ENCODE measurements at regions of chr15 and their contacts with region 1.

Region 1: GRCh38 chr15:44501768-44502366 is 35.1 kb upstream of the EIF3J start:
- DNase-seq: no peak
- ATAC-seq: peak; percentile 48
- H3K4me3 Mint-ChIP-seq: no peak overlapping the region
- H3K27ac Mint-ChIP-seq: no peak overlapping the region
- H3K4me1 Mint-ChIP-seq: peaks cover 22% of the 10 kb centered on the region
- H3K27me3 Mint-ChIP-seq: no peaks in the 10 kb centered on the region

Region 2: GRCh38 chr15:43903864-43904290 is 598.0 kb before region 1 on chr15:
- CTCF ChIA-PET with region 1: no interaction called
- POLR2A ChIA-PET with region 1: no interaction called
- intact Hi-C with region 1: loop called in 1 of 2 experiments (anchors 1 kb)
- DNase-seq: peak; percentile 72
- ATAC-seq: peak; percentile 83
- H3K4me3 Mint-ChIP-seq: no peak overlapping the region
- H3K27ac Mint-ChIP-seq: no peak overlapping the region
- H3K4me1 Mint-ChIP-seq: peaks cover 2% of the 10 kb centered on the region
- H3K27me3 Mint-ChIP-seq: no peaks in the 10 kb centered on the region

Region 3: DNA sequence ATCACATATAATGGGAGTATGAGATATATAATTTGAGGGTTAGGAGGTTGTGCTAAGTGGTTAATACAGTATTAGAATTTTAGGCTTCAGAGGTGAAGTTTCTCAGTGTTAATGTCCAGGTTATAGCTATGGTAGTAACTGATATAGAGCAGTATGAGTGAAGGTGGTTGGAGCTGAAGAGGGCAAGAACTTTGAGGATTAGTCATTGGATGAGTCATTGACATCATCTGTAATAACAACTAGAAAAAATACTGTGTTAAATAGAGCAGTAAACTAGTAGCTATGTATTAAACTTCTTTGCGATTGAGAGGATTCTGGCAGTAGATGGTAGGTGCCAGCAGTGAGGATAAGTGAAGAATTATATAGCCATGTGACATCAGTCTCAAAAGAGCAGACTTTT is 12.4 kb before region 1 on chr15:
- CTCF ChIA-PET with region 1: interaction called, 17 read pairs
- POLR2A ChIA-PET with region 1: interaction called, 4 read pairs
- intact Hi-C with region 1: loop called in 1 of 2 experiments (anchors 2 kb)
- DNase-seq: no peak
- ATAC-seq: peak; percentile 94
- H3K4me3 Mint-ChIP-seq: no peak overlapping the region
- H3K27ac Mint-ChIP-seq: peak overlapping the region; percentile 71
- H3K4me1 Mint-ChIP-seq: peaks cover 43% of the 10 kb centered on the region
- H3K27me3 Mint-ChIP-seq: no peaks in the 10 kb centered on the region

Measured in activated CD4-positive, alpha-beta T cell treated with anti-CD3 and anti-CD28 coated beads for 36 hours (primary cell).